GM23248 (cell line): ENCODE measurements at regions of chr6 and their contacts with region 1.

Region 1: GRCh38 chr6:116096979-116097816 is 3.5 kb upstream of the NT5DC1 start:
- DNase-seq: peak; percentile 57
- H3K4me3 ChIP-seq: no peak overlapping the region
- H3K27ac ChIP-seq: no peak overlapping the region
- H3K4me1 ChIP-seq: 0 out of 2 replicates have a peak, but pooled peaks cover 5% of the 10 kb centered on the region
- H3K27me3 ChIP-seq: no peaks in the 10 kb centered on the region

Region 2: DNA sequence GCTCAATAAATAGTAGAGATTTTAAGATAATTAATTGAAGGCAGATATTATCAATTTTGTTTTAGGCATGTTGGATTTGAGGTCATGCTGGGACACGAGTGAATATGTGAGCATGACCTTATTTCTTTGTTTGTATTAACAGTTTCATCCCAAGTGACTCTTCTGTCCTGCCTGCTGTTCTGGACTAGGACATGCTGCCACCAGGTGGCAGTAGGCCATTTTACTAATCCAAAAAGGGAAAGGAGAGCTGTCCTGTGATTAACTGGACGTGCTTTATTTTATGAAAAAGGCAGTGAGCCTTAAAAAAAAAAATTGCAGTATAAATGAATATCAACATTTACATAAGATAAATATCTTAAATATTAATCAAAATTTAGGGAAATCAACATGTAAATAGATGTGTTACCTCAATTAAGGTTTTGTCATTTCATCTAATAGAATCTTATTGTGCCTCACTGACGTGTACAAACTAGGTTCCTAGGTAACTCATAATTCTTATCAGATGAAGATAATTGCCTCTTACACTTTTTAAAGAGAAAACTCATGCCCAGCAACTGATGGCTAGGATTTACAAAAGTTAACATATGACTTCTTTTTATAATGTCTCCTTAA is 86.3 kb before region 1 on chr6:
- in situ Hi-C with region 1: loop called (anchors 10 kb)
- DNase-seq: peak; percentile 81
- H3K4me3 ChIP-seq: no peak overlapping the region
- H3K27ac ChIP-seq: no peak overlapping the region
- H3K4me1 ChIP-seq: peaks cover 33% of the 10 kb centered on the region
- H3K27me3 ChIP-seq: no peaks in the 10 kb centered on the region